ENCODE measurements at regions of chr5 and their contacts with region 1.

Region 1: GRCh38 chr5:147822686-147823491 is 8.6 kb downstream of the SPINK1 start:
- DNase-seq: peak; percentile 48
- H3K4me3 ChIP-seq: peak overlapping the region in 1 of 2 experiments; percentile 42; a peak in 1 of 4 replicates
- H3K27ac ChIP-seq: no peak overlapping the region
- H3K4me1 ChIP-seq: peaks cover 0 to 8% of the 10 kb centered on the region in 2 experiments; a peak in 1 of 4 replicates
- H3K27me3 ChIP-seq: no peaks in the 10 kb centered on the region
- CTCF ChIP-seq: peak; percentile 99
- EP300 ChIP-seq: no peak
- RAD21 ChIP-seq: peak; percentile 100

Region 2: DNA sequence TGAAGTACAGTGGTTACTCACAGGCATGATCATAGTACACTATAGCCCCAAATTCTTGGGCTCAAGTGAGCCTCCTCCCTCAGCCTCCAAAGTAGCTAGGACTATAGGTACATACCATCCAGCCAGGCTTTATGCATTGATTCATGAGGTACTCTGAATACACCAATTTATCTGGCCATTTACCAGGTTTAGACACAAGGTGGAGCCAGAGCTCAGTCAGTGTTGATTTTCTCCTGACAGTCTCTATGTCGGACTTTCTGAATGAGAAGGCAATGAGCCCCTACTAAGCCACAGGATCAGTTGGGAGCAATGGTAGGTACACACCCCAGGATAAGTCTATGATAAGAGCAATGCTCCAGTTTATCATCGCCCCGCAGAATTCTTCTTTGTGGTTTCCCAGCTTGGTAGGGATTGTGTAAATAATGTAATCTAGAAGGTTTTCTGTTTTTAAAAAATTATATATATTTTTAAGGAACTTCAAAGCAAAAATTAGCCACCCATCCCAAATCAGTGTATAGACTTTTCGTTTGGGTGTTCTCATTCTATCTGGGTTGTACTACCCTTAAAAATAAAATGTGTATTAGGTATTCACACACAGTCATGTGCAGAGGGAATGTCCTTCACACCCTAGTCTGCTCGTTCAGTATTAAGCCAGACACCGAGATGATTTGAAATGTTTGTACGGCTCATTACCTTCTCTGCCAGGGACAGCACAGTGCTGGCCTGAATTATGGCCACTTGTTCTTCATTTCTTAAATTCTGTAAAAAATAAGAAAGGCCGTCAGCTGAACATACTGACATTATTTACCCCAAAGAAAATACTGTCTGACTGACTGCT is 194.6 kb before region 1 on chr5:
- CTCF ChIA-PET with region 1: interaction called, 257 read pairs
- POLR2A ChIA-PET with region 1: interaction called, 3 read pairs
- DNase-seq: peak; percentile 58
- H3K4me3 ChIP-seq: no peak overlapping the region; a peak in 1 of 4 replicates
- H3K27ac ChIP-seq: no peak overlapping the region
- H3K4me1 ChIP-seq: peaks cover 0 to 15% of the 10 kb centered on the region in 2 experiments; a peak in 1 of 4 replicates
- H3K27me3 ChIP-seq: no peaks in the 10 kb centered on the region
- CTCF ChIP-seq: peak; percentile 85
- EP300 ChIP-seq: no peak
- RAD21 ChIP-seq: peak; percentile 97

Region 3: GRCh38 chr5:147648597-147648996 is 174.3 kb before region 1 on chr5:
- CTCF ChIA-PET with region 1: interaction called, 15 read pairs
- POLR2A ChIA-PET with region 1: no interaction called
- DNase-seq: no peak
- H3K4me3 ChIP-seq: no peak overlapping the region
- H3K27ac ChIP-seq: no peak overlapping the region
- H3K4me1 ChIP-seq: no peaks in the 10 kb centered on the region; a peak in 1 of 4 replicates
- H3K27me3 ChIP-seq: no peaks in the 10 kb centered on the region
- CTCF ChIP-seq: no peak
- EP300 ChIP-seq: no peak
- RAD21 ChIP-seq: no peak

Region 4: DNA sequence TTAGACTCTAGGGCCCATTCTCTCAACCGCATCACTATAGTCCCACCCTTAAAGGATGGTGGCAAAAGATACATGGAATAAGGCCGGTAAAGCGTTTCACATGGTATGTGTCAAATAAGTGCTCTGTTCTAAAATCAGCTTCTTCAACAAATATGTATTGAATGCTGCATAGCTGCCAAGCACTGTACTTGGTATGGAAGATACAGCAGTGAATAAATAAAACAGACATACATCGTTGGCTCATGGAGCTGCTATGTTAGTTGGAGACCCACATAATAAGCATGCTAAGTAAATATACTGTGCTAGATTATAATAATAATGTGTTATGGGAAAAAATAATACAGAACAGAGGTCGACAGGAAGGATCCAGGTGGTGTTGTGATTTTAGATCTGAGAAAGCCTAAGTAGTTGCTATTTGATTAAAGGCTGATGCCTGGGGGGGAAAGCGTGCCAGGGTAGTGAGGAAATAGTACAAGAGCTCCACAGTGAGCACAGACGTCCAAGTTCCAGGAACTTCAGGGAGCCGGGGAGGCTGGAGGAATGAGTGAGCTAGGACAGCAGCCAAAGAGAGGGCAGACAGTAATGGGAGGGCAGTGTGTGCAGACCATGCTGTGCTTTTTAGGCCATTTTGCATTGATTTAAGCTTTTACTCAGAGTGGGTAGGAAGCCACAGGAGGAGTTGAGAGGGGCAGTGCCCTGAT is 134.1 kb before region 1 on chr5:
- CTCF ChIA-PET with region 1: interaction called, 10 read pairs
- POLR2A ChIA-PET with region 1: no interaction called
- DNase-seq: no peak
- H3K4me3 ChIP-seq: no peak overlapping the region
- H3K27ac ChIP-seq: peak overlapping the region in 1 of 2 experiments; percentile 36; a peak in 1 of 4 replicates
- H3K4me1 ChIP-seq: peaks cover 10 to 16% of the 10 kb centered on the region in 2 experiments; a peak in 3 of 4 replicates
- H3K27me3 ChIP-seq: no peaks in the 10 kb centered on the region
- CTCF ChIP-seq: no peak
- EP300 ChIP-seq: no peak
- RAD21 ChIP-seq: no peak

Region 5: GRCh38 chr5:147788023-147788422 is 34.9 kb before region 1 on chr5:
- CTCF ChIA-PET with region 1: interaction called, 16 read pairs
- POLR2A ChIA-PET with region 1: no interaction called
- DNase-seq: no peak
- H3K4me3 ChIP-seq: no peak overlapping the region
- H3K27ac ChIP-seq: no peak overlapping the region
- H3K4me1 ChIP-seq: no peaks in the 10 kb centered on the region; a peak in 2 of 4 replicates
- H3K27me3 ChIP-seq: no peaks in the 10 kb centered on the region
- CTCF ChIP-seq: no peak
- EP300 ChIP-seq: no peak
- RAD21 ChIP-seq: no peak

Region 6: DNA sequence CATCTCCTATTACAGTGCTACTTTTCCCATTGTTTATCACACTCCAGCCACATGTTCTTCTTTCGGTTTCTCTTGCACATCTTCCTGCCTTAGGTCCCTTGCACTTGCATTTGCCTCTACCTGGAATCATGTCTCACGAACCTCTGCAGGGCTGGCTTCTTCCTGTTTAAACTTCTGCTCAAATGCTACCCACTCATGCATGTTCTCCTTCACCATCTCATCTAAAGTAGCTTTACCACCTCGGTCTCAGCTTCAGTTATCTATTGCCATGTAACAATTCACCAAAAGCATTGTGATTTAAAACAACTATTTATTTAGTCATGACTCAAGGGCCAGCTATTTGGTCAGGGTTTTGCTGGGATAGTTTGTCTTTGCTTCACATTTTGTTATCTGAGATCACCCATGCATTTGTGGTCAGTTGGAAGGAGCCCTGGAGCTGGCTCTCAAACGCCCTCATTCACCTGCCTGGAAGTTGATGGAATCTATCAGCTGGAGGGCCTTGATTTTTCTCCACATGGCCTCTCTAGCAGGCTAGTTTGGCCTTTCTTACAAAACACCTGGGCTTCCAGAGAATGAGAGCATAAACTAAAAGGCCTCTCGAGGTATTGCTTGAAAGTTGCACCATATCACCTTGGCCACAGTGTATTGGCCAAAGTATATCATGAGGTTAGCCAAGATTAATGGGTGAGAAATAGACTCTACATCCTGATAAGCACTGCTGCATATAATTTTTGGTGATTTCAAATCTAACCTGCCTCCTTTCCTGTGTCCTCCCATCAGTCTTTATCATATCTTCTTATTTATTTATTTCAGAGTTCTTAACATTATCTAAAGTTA is 12.8 kb before region 1 on chr5:
- CTCF ChIA-PET with region 1: interaction called, 24 read pairs
- POLR2A ChIA-PET with region 1: no interaction called
- DNase-seq: no peak
- H3K4me3 ChIP-seq: no peak overlapping the region
- H3K27ac ChIP-seq: no peak overlapping the region
- H3K4me1 ChIP-seq: no peaks in the 10 kb centered on the region; a peak in 1 of 4 replicates
- H3K27me3 ChIP-seq: no peaks in the 10 kb centered on the region
- CTCF ChIP-seq: no peak
- EP300 ChIP-seq: no peak
- RAD21 ChIP-seq: no peak

Region 7: GRCh38 chr5:147849226-147849625 is 26.3 kb after region 1 on chr5:
- CTCF ChIA-PET with region 1: interaction called, 19 read pairs
- POLR2A ChIA-PET with region 1: no interaction called
- DNase-seq: no peak
- H3K4me3 ChIP-seq: no peak overlapping the region
- H3K27ac ChIP-seq: no peak overlapping the region
- H3K4me1 ChIP-seq: 0 out of 4 replicates have a peak, but pooled peaks cover 0 to 9% of the 10 kb centered on the region in 2 experiments
- H3K27me3 ChIP-seq: no peaks in the 10 kb centered on the region
- CTCF ChIP-seq: no peak
- EP300 ChIP-seq: no peak
- RAD21 ChIP-seq: no peak

Region 8: DNA sequence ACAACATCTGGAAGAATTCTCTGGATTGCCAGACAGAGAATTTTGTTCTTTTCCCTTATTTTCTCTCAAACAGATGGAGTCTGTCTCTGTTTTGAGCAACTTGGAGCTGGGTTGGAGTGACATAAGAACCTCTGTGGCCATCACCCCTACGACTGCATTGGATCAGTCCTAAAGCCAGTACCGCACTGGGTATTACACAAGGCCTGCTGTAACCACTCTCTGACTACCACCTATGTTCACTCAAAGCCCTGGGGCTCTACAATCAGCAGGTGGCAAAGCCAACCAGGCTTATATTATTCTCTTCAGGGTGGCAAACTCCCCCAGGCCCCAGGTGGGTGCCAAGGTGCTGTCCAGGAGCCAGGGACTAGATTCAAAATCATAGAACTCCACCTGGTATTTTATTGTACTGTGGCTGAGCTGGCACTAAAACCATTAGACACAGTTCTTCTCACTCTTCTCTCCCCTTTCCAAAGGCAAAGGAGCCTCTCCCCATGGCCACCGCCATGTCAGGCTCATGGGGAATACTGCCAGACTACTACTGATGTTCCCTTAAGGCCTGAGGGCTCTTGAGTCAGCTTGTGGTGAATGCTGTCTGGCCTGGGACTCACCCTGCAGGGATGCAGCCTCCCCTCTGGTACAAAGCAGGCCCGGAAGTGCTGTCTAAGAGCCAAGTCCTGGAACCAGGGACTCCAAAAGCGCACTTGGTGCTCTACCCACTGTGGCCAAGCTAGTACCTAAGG is 116.3 kb after region 1 on chr5:
- CTCF ChIA-PET with region 1: no interaction called
- POLR2A ChIA-PET with region 1: no interaction called
- DNase-seq: no peak
- H3K4me3 ChIP-seq: no peak overlapping the region
- H3K27ac ChIP-seq: no peak overlapping the region
- H3K4me1 ChIP-seq: no peaks in the 10 kb centered on the region; a peak in 1 of 4 replicates
- H3K27me3 ChIP-seq: no peaks in the 10 kb centered on the region
- CTCF ChIP-seq: no peak
- EP300 ChIP-seq: no peak
- RAD21 ChIP-seq: no peak

Measured in SK-N-SH (cell line).